ENCODE measurements at regions of chr12 and their contacts with region 1.

Region 1: DNA sequence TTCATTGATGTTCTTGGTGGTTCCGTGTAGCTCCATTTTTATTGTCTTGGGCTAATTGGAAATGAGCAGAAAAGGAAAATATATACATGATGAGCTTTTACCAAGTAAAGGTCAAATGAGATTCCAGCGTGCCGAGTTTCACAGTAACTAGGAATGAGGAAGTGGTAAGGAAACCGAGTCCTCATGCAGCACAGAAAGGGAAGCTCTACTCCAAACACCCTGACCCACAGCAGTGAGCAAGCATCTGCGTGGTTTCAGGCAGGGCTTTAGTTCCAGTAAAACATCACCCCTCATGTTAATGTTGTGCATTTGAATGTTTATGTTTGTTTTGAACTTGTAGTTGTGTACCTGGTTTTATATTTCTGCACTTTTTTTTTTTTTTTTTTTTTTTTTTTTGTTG is 208.0 kb downstream of the SLC41A2 start:
- DNase-seq: no peak
- ATAC-seq: peak; percentile 51
- H3K4me3 Mint-ChIP-seq: no peak overlapping the region
- H3K27ac Mint-ChIP-seq: peak overlapping the region; percentile 50
- H3K4me1 Mint-ChIP-seq: peaks cover 66% of the 10 kb centered on the region
- H3K27me3 Mint-ChIP-seq: no peaks in the 10 kb centered on the region
- CTCF ChIP-seq: no peak

Region 2: GRCh38 chr12:104733717-104734175 is 16.3 kb before region 1 on chr12:
- CTCF ChIA-PET with region 1: no interaction called
- POLR2A ChIA-PET with region 1: no interaction called
- intact Hi-C with region 1: no loop called
- DNase-seq: no peak
- ATAC-seq: peak; percentile 28
- H3K4me3 Mint-ChIP-seq: no peak overlapping the region
- H3K27ac Mint-ChIP-seq: no peak overlapping the region
- H3K4me1 Mint-ChIP-seq: peaks cover 50% of the 10 kb centered on the region
- H3K27me3 Mint-ChIP-seq: no peaks in the 10 kb centered on the region
- CTCF ChIP-seq: no peak

Region 3: DNA sequence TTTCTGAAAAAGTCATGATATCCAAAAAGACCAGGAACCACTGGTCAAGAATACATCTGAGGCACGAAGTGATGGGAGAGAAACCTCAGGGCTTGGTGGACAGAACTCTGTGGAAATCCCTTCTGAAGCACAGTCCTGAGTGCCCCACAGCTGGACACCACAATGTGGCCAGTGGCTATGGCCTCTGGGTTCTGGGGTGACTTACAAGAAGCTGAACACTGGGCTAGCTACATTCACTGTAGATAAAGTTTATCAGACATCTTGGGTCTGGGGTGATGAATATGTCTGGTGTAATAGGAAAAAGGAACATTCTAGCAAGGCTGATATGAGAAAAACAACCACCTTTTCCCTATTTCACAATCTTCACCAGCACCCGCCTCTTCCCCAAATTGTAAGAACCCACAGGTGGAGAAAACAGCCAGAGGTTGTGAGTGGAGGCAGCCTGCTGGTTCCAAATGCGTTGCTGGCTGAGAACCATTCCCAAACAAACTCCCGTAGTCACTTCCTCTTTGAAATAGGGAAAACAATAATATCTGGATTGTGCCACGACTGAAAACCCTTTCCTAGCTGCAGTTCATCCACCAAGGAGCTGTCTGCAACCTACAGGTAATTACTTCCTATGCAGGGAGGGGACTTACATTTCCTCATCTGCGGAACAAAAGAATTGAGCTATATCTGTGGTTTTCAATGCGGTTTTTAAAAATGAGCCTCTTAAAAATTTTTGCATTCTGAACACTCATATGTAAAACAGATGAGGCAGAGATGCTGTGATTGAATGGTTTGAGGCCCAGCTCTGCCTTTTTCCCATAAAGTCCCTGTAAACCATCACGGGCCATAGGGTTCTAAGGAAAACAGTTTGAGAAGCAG is 14.4 kb after region 1 on chr12:
- CTCF ChIA-PET with region 1: no interaction called
- POLR2A ChIA-PET with region 1: no interaction called
- intact Hi-C with region 1: loop called (anchors 1 kb)
- DNase-seq: no peak
- ATAC-seq: peak; percentile 69
- H3K4me3 Mint-ChIP-seq: peak overlapping the region; percentile 24
- H3K27ac Mint-ChIP-seq: no peak overlapping the region
- H3K4me1 Mint-ChIP-seq: peaks cover 28% of the 10 kb centered on the region
- H3K27me3 Mint-ChIP-seq: peaks cover 12% of the 10 kb centered on the region
- CTCF ChIP-seq: no peak

Measured in activated B cell treated with CpG ODN at 0.5 μM for 24 hours (primary cell).